Heart left ventricle (tissue), 16 donors: ENCODE measurements at regions of chr7 and their contacts with region 1.

Region 1: GRCh38 chr7:71408271-71408670 is 276.3 kb downstream of the GALNT17 start:
- DNase-seq: peak; percentile 61 to 90 (median 77)
- ATAC-seq: peak; percentile 95 to 96 (median 96)
- H3K4me3 ChIP-seq: no peak overlapping the region
- H3K27ac ChIP-seq: peak overlapping the region in 7 of 12 donors; percentile 19 to 72 (median 54)
- H3K4me1 ChIP-seq: peaks cover 0 to 33% (median 0%) of the 10 kb centered on the region in 12 donors
- H3K27me3 ChIP-seq: no peaks in the 10 kb centered on the region
- CTCF ChIP-seq: no peak
- POLR2A ChIP-seq: no peak

Region 2: DNA sequence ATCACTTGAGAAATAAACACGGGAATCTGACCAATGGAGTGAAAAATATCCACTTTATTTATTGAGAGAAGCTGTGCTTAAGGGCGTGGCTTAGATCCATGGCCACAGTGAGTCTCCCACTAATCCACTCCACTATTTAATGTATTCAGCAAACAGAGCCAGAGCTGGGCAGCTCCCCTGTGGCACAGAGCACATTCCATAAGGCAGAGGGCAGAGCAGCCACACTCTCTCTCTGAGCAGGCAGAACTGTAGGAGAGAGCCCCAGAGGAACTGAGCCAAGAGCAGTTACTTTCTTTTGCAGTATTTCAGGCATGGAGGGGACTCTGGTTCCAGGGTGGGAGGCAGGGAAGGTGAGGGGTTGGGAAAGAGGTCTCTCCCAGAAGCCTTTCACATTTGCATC is 170.3 kb before region 1 on chr7:
- intact Hi-C with region 1: loop called in 5 of 10 experiments (anchors 5 to 10 kb)
- DNase-seq: peak in 4 of 5 donors; percentile 32 to 74 (median 46)
- ATAC-seq: peak; percentile 85 to 90 (median 88)
- H3K4me3 ChIP-seq: no peak overlapping the region
- H3K27ac ChIP-seq: peak overlapping the region in 11 of 12 donors; percentile 50 to 96 (median 84)
- H3K4me1 ChIP-seq: peaks cover 0 to 40% (median 17%) of the 10 kb centered on the region in 12 donors
- H3K27me3 ChIP-seq: no peaks in the 10 kb centered on the region
- CTCF ChIP-seq: peak in 10 of 12 donors; percentile 9 to 59 (median 30)
- POLR2A ChIP-seq: no peak

Region 3: DNA sequence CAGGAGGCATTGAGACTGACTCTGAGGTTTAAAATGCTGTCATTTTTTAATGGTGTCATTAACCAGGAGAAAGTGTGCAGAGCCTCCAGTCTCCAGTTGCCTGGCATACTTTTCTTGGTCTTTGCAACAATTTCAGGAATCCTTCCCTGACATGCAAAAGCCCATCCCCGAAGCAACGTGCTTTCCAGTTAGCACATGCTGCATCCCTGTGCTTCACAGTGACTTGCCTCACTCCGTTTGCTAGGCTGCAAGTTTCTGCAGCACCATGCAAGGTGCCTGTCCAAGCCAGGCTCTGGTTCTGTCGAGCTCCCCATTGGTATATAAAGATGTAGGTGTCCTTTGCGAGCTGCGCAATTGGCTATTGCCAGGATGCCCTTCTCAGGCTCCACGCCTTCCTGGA is 141.4 kb before region 1 on chr7:
- intact Hi-C with region 1: loop called in 4 of 10 experiments (anchors 10 kb)
- DNase-seq: no peak
- ATAC-seq: no peak
- H3K4me3 ChIP-seq: no peak overlapping the region
- H3K27ac ChIP-seq: peak overlapping the region in 1 of 12 donors; percentile 22
- H3K4me1 ChIP-seq: peaks cover 0 to 27% (median 7%) of the 10 kb centered on the region in 12 donors
- H3K27me3 ChIP-seq: no peaks in the 10 kb centered on the region
- CTCF ChIP-seq: no peak
- POLR2A ChIP-seq: no peak

Region 4: GRCh38 chr7:71272509-71273490 is 135.5 kb before region 1 on chr7:
- intact Hi-C with region 1: loop called in 4 of 10 experiments (anchors 10 kb)
- DNase-seq: peak in 2 of 5 donors; percentile 43 to 50
- ATAC-seq: peak in 3 of 4 donors; percentile 47 to 69 (median 55)
- H3K4me3 ChIP-seq: no peak overlapping the region
- H3K27ac ChIP-seq: peak overlapping the region in 10 of 12 donors; percentile 34 to 93 (median 75)
- H3K4me1 ChIP-seq: peaks cover 0 to 32% (median 11%) of the 10 kb centered on the region in 12 donors
- H3K27me3 ChIP-seq: no peaks in the 10 kb centered on the region
- CTCF ChIP-seq: peak in 1 of 12 donors; percentile 8
- POLR2A ChIP-seq: no peak

Region 5: DNA sequence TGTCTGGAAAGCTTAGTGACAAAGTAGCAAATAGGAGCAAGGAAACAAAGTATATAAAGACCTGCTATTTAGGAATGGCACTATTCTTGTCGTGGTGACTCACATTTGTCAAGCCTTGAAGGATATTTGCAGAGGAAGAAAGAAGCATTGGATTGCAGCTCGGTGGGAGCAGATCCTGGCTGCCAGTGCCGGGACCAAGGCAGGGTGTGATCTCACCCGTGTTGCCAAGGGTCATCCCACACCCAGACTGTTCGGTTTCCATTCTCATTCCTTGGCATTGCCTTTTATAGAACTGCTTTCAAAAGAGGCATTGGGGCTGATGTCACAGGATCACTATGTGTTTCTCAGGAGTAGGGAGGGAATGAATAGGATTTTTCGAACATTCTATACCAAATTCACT is 100.2 kb before region 1 on chr7:
- intact Hi-C with region 1: no loop called
- DNase-seq: peak in 4 of 5 donors; percentile 43 to 64 (median 58)
- ATAC-seq: peak; percentile 82 to 91 (median 89)
- H3K4me3 ChIP-seq: no peak overlapping the region
- H3K27ac ChIP-seq: peak overlapping the region; percentile 22 to 95 (median 68)
- H3K4me1 ChIP-seq: peaks cover 0 to 28% (median 2%) of the 10 kb centered on the region in 12 donors
- H3K27me3 ChIP-seq: no peaks in the 10 kb centered on the region
- CTCF ChIP-seq: no peak
- POLR2A ChIP-seq: no peak

Region 6: GRCh38 chr7:71633551-71634008 is 225.3 kb after region 1 on chr7:
- intact Hi-C with region 1: loop called in 1 of 10 experiments (anchors 10 kb)
- DNase-seq: no peak
- ATAC-seq: no peak
- H3K4me3 ChIP-seq: no peak overlapping the region
- H3K27ac ChIP-seq: peak overlapping the region in 8 of 12 donors; percentile 31 to 62 (median 52)
- H3K4me1 ChIP-seq: peaks cover 0 to 33% (median 11%) of the 10 kb centered on the region in 12 donors
- H3K27me3 ChIP-seq: no peaks in the 10 kb centered on the region
- CTCF ChIP-seq: no peak
- POLR2A ChIP-seq: no peak